HEK293 (cell line): ENCODE measurements at regions of chr2 and their contacts with region 1.

Region 1: DNA sequence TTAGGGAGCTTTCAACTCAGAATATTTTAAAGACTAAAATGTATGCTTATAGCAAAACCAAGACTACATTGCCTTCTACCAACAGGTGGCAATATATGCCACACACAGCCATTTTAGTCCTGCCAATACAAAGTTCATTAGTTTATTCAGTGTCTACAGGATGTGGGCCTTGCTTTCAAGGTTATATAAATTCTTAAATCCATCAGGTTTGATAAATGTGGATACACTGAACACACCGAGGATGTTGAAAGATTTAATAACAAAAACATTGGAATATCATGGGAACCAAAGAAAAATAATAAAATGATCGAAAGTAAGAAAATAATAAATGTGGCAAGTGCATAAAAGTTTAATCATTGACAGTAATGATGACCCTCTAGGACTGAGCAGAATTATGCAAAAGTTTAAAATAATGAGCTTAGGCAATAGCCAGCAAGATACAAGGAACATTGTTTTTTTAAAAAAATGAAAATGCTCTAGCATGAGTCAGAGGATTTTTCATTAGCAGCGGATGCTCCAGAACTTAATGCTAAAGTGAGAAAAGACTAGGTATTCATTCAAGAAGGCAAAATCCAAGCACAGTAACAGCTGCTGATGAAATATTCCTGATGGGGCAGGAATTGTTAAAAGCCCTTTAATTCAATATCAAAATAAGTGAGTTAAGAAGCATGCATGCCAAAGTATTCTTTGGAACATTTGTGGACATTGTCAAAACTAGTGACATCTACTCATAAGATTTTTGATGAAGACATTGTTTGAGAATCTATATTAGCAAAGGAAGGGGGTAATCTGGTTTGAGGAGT is 14.2 kb downstream of the SCN9A start:
- H3K4me3 ChIP-seq: no peak overlapping the region
- H3K27ac ChIP-seq: no peak overlapping the region
- H3K4me1 ChIP-seq: peaks cover 8% of the 10 kb centered on the region
- CTCF ChIP-seq: peak; percentile 24; the same call in 1 of the 2 replicates

Region 2: DNA sequence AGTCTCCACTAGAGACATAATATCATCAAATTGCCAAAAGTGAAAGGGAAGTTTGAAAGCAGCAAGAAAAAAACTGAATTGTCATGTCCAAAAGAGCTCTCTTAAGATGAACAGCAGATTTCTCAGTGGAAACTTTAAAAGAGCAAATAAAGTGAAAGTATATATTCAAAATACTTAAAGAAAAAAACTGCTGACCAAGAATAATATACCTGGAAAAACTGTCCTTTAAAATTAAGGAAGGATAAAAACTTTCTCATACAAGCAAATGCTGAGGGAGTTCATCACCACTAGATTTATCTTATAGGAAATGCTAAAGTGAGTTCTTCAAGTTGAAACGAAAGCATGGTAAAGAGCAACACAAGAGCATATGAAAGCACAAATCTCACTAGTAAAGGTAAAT is 150.5 kb before region 1 on chr2:
- CTCF ChIA-PET with region 1: no interaction called
- POLR2A ChIA-PET with region 1: no interaction called
- H3K4me3 ChIP-seq: no peak overlapping the region
- H3K27ac ChIP-seq: no peak overlapping the region
- H3K4me1 ChIP-seq: no peaks in the 10 kb centered on the region
- CTCF ChIP-seq: no peak

Region 3: GRCh38 chr2:166269322-166269721 is 92.2 kb before region 1 on chr2:
- CTCF ChIA-PET with region 1: no interaction called
- POLR2A ChIA-PET with region 1: no interaction called
- H3K4me3 ChIP-seq: no peak overlapping the region
- H3K27ac ChIP-seq: no peak overlapping the region
- H3K4me1 ChIP-seq: no peaks in the 10 kb centered on the region
- CTCF ChIP-seq: no peak

Region 4: GRCh38 chr2:166351319-166351718 is 10.2 kb before region 1 on chr2:
- CTCF ChIA-PET with region 1: interaction called, 18 read pairs
- POLR2A ChIA-PET with region 1: no interaction called
- H3K4me3 ChIP-seq: no peak overlapping the region
- H3K27ac ChIP-seq: no peak overlapping the region
- H3K4me1 ChIP-seq: no peaks in the 10 kb centered on the region
- CTCF ChIP-seq: no peak

Region 5: DNA sequence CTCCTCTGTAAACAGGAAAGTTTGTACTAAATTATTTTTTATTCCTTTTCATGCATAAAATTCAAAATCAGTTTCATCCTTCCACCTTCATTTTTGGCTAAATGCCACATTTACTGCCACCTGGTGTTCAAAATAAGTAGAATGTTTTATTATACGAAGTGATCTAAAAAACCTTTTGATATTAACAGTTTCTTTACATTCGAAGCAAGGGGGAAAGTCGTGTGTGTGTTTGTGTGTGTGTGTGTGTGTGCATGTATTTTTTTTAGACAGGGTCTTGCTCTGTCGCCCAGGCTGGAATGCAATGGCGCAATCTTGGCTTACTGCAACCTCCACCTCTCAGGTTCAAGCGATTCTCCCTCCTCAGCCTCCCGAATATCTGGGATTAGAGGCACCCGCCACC is 23.2 kb after region 1 on chr2:
- CTCF ChIA-PET with region 1: interaction called, 21 read pairs
- POLR2A ChIA-PET with region 1: no interaction called
- H3K4me3 ChIP-seq: no peak overlapping the region
- H3K27ac ChIP-seq: no peak overlapping the region
- H3K4me1 ChIP-seq: no peaks in the 10 kb centered on the region
- CTCF ChIP-seq: peak; percentile 36; the same call in 1 of the 2 replicates

Region 6: DNA sequence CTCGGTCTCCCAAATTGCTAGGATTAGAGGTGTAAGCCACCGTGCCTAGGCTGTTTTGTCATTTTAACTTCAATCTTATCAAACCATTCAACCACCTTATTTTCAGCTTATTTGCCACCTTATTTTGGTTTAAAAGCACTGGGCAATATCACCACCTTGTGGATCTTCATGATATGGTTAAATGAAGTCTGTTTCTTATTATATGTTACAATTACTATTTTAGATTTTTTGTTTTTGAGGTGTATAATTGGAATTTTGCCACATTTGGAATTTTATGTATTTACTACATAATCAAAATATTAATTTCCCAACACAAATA is 58.0 kb after region 1 on chr2:
- CTCF ChIA-PET with region 1: interaction called, 14 read pairs
- POLR2A ChIA-PET with region 1: no interaction called
- H3K4me3 ChIP-seq: no peak overlapping the region
- H3K27ac ChIP-seq: no peak overlapping the region
- H3K4me1 ChIP-seq: no peaks in the 10 kb centered on the region
- CTCF ChIP-seq: peak; percentile 47; the same call in 1 of the 2 replicates